MCF 10A (cell line): ENCODE measurements at regions of chr6 and their contacts with region 1.

Region 1: DNA sequence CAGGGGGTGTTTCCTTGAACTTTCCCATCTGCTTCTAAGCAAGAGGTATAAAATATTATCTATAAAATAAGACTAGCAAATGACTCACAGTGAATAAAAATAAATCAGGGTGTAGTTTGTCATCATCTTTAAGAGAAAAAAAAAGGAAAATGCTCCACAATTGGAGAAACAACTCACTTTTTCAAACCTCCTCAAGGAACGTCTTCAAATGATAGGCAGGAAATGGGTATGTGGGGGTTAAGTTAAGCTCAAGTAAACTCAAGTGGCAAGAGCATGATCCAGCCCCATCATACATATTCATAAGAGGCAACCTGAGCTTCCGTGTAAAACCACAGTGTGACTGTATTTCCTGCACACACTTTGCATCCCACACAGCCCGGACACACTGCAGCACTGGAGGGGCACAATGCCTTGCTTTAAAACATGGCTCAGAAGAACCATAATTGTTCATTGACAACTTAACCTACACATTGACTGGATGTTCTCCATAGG is 58.5 kb upstream of the CEP85L start:
- DNase-seq: peak; percentile 78
- H3K4me3 Mint-ChIP-seq: peak overlapping the region; percentile 73
- H3K27ac Mint-ChIP-seq: peak overlapping the region; percentile 93
- H3K4me1 Mint-ChIP-seq: peaks cover 41% of the 10 kb centered on the region
- H3K27me3 Mint-ChIP-seq: no peaks in the 10 kb centered on the region
- CTCF ChIP-seq: no peak

Region 2: DNA sequence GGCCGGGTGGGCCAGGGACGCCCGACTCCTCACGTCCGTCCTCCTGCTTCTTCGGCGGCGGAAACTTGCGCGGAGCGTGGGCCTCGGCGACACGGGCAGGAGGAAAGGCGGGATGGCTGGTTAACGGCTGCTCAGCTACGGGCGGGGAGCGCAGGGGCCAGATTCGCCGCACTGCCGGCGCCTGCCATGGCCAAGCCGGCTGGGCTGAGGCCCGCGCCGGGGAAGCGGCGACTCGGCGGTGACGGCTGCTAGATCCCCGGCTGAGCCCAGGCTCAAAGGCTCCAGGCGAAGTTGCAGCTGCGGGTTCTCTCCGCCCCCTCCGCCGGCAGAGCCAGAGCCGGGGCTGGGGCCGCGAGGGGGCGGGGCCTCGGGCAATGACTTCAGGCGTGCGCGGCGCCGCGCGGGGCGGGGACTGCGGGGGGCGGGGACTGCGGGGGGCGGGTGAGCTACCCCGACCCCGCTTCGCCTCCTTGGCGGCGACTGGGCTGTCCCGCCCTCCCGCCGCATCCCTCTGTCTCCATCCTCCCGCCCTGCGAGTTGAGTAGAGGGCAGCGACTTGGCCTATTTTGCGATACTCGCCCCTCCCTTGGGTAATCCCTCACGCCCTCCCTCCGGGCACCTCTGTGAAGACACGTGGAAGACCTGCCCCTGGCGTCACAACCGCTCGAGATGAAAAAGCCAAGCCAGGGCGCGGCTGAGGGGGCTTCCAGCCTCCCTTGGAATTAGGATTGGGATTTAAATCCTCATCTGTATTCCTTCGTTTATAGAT is 58.4 kb before region 1 on chr6 and contains the start of gene CEP85L:
- CTCF ChIA-PET with region 1: interaction called, 4 read pairs
- POLR2A ChIA-PET with region 1: interaction called, 13 read pairs
- intact Hi-C with region 1: loop called (anchors 1 kb)
- DNase-seq: peak; percentile 90
- H3K4me3 Mint-ChIP-seq: peak within 1 kb of the TSS; percentile 85
- H3K27ac Mint-ChIP-seq: peak within 1 kb of the TSS; percentile 71
- H3K4me1 Mint-ChIP-seq: peaks cover 6% of the 10 kb centered on the region
- H3K27me3 Mint-ChIP-seq: no peaks in the 10 kb centered on the region
- CTCF ChIP-seq: no peak
- total RNA-seq, gene CEP85L: 8.4 and 10.0 TPM in 2 replicates

Region 3: DNA sequence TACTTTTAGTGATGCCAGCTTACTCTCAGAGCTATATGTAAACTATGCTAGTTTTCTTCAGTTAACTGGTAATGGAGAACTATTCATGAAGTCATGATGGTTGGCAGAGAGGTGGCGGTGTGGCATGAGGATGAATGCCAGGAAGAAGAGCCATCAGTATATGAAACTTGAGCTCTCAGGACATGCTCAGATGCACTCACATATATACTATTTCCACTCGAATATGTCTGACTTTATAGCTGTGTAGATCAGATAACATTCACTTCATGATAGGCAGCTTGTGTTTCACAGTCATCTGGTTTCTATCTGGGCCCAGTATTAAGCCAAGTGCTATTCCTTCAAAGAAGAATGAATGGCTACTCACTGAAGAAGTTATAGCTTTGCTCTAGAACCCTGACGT is 12.4 kb before region 1 on chr6:
- CTCF ChIA-PET with region 1: interaction called, 10 read pairs
- POLR2A ChIA-PET with region 1: interaction called, 5 read pairs
- intact Hi-C with region 1: no loop called
- DNase-seq: no peak
- H3K4me3 Mint-ChIP-seq: no peak overlapping the region
- H3K27ac Mint-ChIP-seq: no peak overlapping the region
- H3K4me1 Mint-ChIP-seq: no peaks in the 10 kb centered on the region
- H3K27me3 Mint-ChIP-seq: no peaks in the 10 kb centered on the region
- CTCF ChIP-seq: no peak

Region 4: GRCh38 chr6:118776607-118777549 is 67.0 kb after region 1 on chr6:
- CTCF ChIA-PET with region 1: interaction called, 3 read pairs
- POLR2A ChIA-PET with region 1: interaction called, 6 read pairs
- intact Hi-C with region 1: loop called (anchors 2 kb)
- DNase-seq: peak; percentile 85
- H3K4me3 Mint-ChIP-seq: peak overlapping the region; percentile 49
- H3K27ac Mint-ChIP-seq: no peak overlapping the region
- H3K4me1 Mint-ChIP-seq: peaks cover 13% of the 10 kb centered on the region
- H3K27me3 Mint-ChIP-seq: no peaks in the 10 kb centered on the region
- CTCF ChIP-seq: peak; percentile 51